ENCODE measurements at regions of chr2 and their contacts with region 1.

Region 1: GRCh38 chr2:189179570-189179950 is at the start of gene COL5A2:
- DNase-seq: peak; percentile 85
- H3K4me3 ChIP-seq: peak within 1 kb of the TSS; percentile 67
- H3K27ac ChIP-seq: peak within 1 kb of the TSS; percentile 74
- H3K4me1 ChIP-seq: peaks cover 19% of the 10 kb centered on the region
- H3K27me3 ChIP-seq: no peaks in the 10 kb centered on the region
- CTCF ChIP-seq: no peak
- total RNA-seq, gene COL5A2: 90.7 and 92.2 TPM in 2 replicates

Region 2: GRCh38 chr2:189115126-189115525 is 64.4 kb before region 1 on chr2:
- CTCF ChIA-PET with region 1: no interaction called
- POLR2A ChIA-PET with region 1: no interaction called
- intact Hi-C with region 1: loop called (anchors 5 kb)
- DNase-seq: peak; percentile 69
- H3K4me3 ChIP-seq: no peak overlapping the region
- H3K27ac ChIP-seq: no peak overlapping the region
- H3K4me1 ChIP-seq: peaks cover 35% of the 10 kb centered on the region
- H3K27me3 ChIP-seq: no peaks in the 10 kb centered on the region
- CTCF ChIP-seq: peak; percentile 56

Region 3: GRCh38 chr2:189142893-189143759 is 36.4 kb before region 1 on chr2:
- CTCF ChIA-PET with region 1: interaction called, 9 read pairs
- POLR2A ChIA-PET with region 1: no interaction called
- intact Hi-C with region 1: loop called (anchors 5 kb)
- DNase-seq: peak; percentile 82
- H3K4me3 ChIP-seq: no peak overlapping the region
- H3K27ac ChIP-seq: peak overlapping the region; percentile 94
- H3K4me1 ChIP-seq: peaks cover 75% of the 10 kb centered on the region
- H3K27me3 ChIP-seq: no peaks in the 10 kb centered on the region
- CTCF ChIP-seq: peak; percentile 97

Region 4: GRCh38 chr2:189210250-189211075 is 30.9 kb after region 1 on chr2:
- CTCF ChIA-PET with region 1: no interaction called
- POLR2A ChIA-PET with region 1: interaction called, 4 read pairs
- intact Hi-C with region 1: loop called (anchors 2 kb)
- DNase-seq: peak; percentile 86
- H3K4me3 ChIP-seq: peak overlapping the region; percentile 18
- H3K27ac ChIP-seq: peak overlapping the region; percentile 85
- H3K4me1 ChIP-seq: peaks cover 27% of the 10 kb centered on the region
- H3K27me3 ChIP-seq: no peaks in the 10 kb centered on the region
- CTCF ChIP-seq: no peak

Region 5: DNA sequence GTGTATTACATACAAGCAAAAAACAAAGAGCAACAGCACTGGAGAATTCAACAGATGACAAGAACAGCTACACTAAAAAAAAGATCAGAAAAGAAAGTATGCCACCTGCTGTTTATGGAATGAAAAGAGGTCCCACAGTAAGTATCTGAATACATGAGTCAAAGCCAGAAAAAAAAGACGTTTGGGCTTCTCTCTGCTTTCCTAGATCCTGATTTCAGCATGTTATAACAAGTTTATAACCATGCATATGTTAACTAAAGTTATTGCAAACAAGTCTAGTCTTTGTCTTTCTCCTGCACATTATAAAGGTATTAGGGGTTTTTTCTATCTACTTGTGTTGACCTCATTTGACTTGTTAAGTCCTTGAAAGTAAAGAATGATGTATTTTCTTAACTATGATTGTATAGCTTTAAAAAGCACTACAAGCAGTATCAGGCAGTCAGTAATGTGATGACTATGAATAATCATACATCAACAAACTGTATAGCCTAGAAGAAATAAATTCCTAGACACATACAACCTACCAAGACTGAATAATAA is 108.5 kb after region 1 on chr2:
- CTCF ChIA-PET with region 1: interaction called, 5 read pairs
- POLR2A ChIA-PET with region 1: no interaction called
- intact Hi-C with region 1: loop called (anchors 2 kb)
- DNase-seq: peak; percentile 91
- H3K4me3 ChIP-seq: no peak overlapping the region
- H3K27ac ChIP-seq: no peak overlapping the region
- H3K4me1 ChIP-seq: peaks cover 17% of the 10 kb centered on the region
- H3K27me3 ChIP-seq: no peaks in the 10 kb centered on the region
- CTCF ChIP-seq: peak; percentile 73

Region 6: DNA sequence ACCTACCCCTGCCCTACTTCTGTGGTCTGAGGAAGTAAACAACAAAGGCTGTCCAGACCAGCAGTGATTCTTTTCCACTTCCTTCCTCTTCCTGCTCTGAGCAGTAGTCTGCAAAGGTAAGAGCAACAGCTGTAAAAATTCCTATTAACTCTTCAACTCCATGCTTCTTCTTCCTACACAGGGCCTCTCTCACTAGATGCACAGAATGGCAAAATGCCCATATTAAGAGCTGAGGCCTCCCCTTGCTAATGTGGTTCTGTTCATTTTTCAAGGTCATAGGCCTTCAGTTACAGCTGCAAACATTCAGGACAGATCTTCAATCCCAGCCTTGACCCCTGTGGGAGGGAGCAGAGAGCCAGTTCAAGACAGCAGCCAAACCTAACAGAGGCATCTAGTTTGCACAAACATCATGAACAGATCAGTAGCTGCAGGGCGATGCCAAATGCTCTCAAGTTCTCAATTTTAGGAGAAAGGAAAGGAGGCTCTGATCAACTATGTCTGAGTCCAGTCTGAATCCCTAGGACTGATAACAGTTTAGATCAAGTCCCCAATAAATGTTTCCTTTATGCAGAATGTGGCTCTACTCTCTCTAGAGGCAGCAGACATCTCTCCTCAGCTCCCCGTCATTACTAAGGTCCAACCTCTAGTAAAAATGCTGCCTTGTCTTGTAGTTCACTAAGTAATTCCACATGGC is 380.2 kb after region 1 on chr2:
- CTCF ChIA-PET with region 1: no interaction called
- POLR2A ChIA-PET with region 1: no interaction called
- intact Hi-C with region 1: no loop called
- DNase-seq: no peak
- H3K4me3 ChIP-seq: no peak overlapping the region
- H3K27ac ChIP-seq: no peak overlapping the region
- H3K4me1 ChIP-seq: no peaks in the 10 kb centered on the region
- H3K27me3 ChIP-seq: no peaks in the 10 kb centered on the region
- CTCF ChIP-seq: no peak

Measured in A673 (cell line).